CD8-positive, alpha-beta T cell (primary cell): ENCODE measurements at regions of chr1 and their contacts with region 1.

Region 1: DNA sequence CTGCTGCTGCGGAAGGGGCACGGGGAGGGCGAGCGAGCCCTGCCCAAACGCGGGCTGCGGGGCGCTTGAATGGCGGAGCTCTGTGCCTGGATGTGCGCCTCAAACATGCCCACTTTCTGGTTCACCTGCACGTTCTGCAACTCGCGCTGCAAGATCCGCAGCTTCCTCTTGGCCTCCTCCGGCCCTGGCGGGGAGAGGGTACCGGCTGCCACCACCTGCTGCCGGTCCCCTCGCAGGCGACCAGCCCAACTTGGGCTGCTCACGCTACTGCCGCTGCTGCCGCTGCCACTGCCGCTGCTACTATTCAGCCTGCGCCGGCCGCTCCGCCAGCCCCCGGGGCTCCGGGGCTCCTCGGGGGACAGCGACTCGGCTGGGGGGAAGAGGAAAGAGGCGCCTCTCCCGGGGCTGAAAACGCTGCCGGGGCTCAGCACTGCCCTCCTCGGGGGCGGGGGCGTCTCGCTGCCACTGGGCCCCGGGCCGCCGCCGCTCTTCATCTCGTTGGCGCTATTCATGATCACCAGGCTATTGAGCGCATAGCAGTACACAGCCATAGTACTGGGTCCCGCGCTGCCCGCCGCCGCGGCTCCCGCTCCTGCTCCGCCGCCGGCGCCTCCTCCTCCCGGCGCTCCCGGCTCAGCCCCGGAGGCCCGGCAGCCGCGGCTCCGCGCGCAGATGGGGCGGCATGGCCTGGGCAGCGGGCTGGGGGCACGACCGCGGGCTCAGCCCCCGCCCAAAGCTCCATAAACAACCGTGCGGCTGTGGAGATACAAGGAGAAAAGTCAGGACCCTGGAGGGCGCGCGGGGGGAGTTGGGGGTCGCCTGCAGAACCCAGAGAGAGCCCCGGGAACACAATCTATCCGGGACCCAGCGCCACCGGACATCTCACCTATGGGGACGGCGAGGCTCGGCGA is 1.9 kb downstream of the ITPKB start:
- DNase-seq: peak in 8 of 9 experiments; percentile 26 to 77 (median 61)
- ATAC-seq: peak; percentile 14
- H3K4me3 ChIP-seq: peak overlapping the region; percentile 99
- H3K4me3 Mint-ChIP-seq: peak overlapping the region; percentile 94
- H3K27ac ChIP-seq: peak overlapping the region; percentile 88 to 98
- H3K27ac Mint-ChIP-seq: peak overlapping the region; percentile 94
- H3K4me1 ChIP-seq: peaks cover 36% of the 10 kb centered on the region
- H3K4me1 Mint-ChIP-seq: peaks cover 44% of the 10 kb centered on the region
- H3K27me3 ChIP-seq: no peaks in the 10 kb centered on the region
- H3K27me3 Mint-ChIP-seq: no peaks in the 10 kb centered on the region
- CTCF ChIP-seq: no peak

Region 2: DNA sequence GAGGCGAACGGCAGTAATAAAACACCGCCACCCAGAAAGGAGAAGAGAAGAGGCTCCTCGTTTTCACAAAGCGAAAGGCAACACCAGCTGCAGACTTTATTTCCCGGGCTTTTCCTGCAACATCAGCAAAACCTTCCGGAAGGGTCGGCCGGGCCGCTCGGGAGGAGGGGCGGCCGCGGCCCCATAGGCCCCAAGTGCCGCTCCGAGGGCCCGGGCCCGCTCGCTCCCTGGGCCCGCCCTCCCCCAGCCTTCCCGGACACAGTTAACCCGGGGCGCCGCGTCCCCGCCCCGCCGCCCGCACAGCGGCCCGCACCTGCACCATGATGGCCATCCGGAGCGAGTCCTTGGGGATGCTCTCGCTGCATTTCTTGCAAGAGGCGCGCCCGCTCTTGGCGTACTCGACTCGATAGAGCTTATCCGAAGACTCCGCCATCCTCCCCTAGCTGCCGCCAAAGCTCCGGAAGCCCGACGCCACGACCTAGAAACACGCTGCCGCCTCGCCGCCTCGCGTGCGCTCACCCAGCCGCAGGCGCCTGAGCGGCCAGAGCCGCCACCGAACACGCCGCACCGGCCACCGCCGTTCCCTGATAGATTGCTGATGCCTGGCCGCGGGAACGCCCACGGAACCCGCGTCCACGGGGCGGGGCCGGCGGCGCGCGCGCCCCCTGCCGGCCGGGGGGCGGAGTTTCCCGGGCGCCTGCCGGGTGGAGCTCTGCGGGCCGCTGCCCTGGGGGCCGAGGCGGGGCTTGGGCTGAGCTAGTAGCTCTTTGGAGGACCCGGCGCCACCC is 329.5 kb before region 1 on chr1 and contains the start of gene PARP1:
- CTCF ChIA-PET with region 1: no interaction called
- POLR2A ChIA-PET with region 1: no interaction called
- intact Hi-C with region 1: loop called in 1 of 2 experiments (anchors 5 kb)
- DNase-seq: peak; percentile 78 to 94 (median 86)
- ATAC-seq: peak; percentile 87
- H3K4me3 ChIP-seq: peak within 1 kb of the TSS; percentile 68 to 92
- H3K4me3 Mint-ChIP-seq: peak within 1 kb of the TSS; percentile 94
- H3K27ac ChIP-seq: peak within 1 kb of the TSS; percentile 64 to 65
- H3K27ac Mint-ChIP-seq: peak within 1 kb of the TSS; percentile 90
- H3K4me1 ChIP-seq: peaks cover 45% of the 10 kb centered on the region
- H3K4me1 Mint-ChIP-seq: peaks cover 46% of the 10 kb centered on the region
- H3K27me3 ChIP-seq: no peaks in the 10 kb centered on the region
- H3K27me3 Mint-ChIP-seq: no peaks in the 10 kb centered on the region
- CTCF ChIP-seq: peak; percentile 73
- total RNA-seq, gene PARP1: 38.6 to 46.2 TPM

Region 3: DNA sequence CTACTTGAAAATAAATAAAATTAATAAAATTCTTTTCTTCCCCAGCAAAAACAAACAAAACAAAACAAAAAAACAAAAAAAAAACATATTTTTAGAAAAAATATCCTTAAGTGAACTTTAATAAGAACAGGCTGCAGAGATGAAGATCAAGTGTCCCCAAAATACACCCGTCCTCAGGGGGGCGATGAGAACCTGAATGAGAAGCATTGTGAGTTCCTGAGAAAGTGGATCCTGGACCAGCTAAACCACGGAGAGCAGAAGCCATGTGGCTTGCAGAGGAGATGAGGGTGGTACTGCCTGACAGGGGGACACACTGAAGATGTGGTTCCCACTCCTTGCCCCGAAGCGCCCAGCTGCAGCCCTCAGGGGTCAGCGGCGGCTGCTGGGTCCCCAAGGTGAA is 87.4 kb before region 1 on chr1:
- CTCF ChIA-PET with region 1: interaction called, 4 read pairs
- POLR2A ChIA-PET with region 1: interaction called, 12 read pairs
- intact Hi-C with region 1: loop called (anchors 1 to 2 kb)
- DNase-seq: peak in 6 of 9 experiments; percentile 53 to 74 (median 64)
- ATAC-seq: no peak
- H3K4me3 ChIP-seq: no peak overlapping the region
- H3K4me3 Mint-ChIP-seq: no peak overlapping the region
- H3K27ac ChIP-seq: peak overlapping the region in 1 of 2 experiments; percentile 23
- H3K27ac Mint-ChIP-seq: no peak overlapping the region
- H3K4me1 ChIP-seq: peaks cover 52% of the 10 kb centered on the region
- H3K4me1 Mint-ChIP-seq: peaks cover 57% of the 10 kb centered on the region
- H3K27me3 ChIP-seq: no peaks in the 10 kb centered on the region
- H3K27me3 Mint-ChIP-seq: no peaks in the 10 kb centered on the region
- CTCF ChIP-seq: peak; percentile 59

Region 4: DNA sequence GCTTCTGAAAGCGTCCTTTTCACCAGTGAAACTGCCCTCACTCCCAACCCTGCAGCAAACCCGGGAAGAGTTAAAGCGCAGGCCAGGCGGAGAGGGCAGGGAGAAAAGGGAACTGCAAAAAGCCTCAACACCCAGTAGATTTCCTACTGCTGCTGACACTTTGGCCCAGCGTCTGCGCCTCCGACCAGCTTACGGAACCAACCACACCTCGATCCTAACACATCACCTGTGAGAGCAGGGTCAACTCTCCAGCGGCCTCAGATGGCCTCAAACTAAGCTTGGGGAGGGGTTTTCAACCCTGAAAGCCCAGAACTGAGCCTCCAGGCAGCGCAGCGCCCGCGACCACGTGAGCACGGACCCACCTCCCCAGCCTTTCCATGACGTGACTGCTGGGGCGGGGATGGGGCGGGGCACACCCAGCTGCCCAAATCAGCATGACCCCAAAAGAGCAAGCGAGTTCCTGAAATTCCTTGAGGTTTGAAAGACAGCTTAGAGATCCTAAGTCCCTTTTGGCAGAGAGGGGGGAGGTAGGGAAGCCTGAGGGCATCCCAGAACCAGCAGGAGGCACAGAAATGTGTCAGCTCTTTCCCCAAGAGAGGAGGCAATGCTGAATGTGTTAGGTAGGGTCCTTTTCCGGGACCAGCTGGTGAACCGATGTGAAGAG is 57.2 kb before region 1 on chr1:
- CTCF ChIA-PET with region 1: interaction called, 8 read pairs
- POLR2A ChIA-PET with region 1: interaction called, 7 read pairs
- intact Hi-C with region 1: loop called (anchors 1 kb)
- DNase-seq: peak; percentile 51 to 88 (median 78)
- ATAC-seq: peak; percentile 18
- H3K4me3 ChIP-seq: peak overlapping the region; percentile 26 to 34
- H3K4me3 Mint-ChIP-seq: peak overlapping the region; percentile 75
- H3K27ac ChIP-seq: peak overlapping the region; percentile 69 to 86
- H3K27ac Mint-ChIP-seq: peak overlapping the region; percentile 99
- H3K4me1 ChIP-seq: peaks cover 99% of the 10 kb centered on the region
- H3K4me1 Mint-ChIP-seq: peaks cover 99% of the 10 kb centered on the region
- H3K27me3 ChIP-seq: no peaks in the 10 kb centered on the region
- H3K27me3 Mint-ChIP-seq: no peaks in the 10 kb centered on the region
- CTCF ChIP-seq: no peak

Region 5: DNA sequence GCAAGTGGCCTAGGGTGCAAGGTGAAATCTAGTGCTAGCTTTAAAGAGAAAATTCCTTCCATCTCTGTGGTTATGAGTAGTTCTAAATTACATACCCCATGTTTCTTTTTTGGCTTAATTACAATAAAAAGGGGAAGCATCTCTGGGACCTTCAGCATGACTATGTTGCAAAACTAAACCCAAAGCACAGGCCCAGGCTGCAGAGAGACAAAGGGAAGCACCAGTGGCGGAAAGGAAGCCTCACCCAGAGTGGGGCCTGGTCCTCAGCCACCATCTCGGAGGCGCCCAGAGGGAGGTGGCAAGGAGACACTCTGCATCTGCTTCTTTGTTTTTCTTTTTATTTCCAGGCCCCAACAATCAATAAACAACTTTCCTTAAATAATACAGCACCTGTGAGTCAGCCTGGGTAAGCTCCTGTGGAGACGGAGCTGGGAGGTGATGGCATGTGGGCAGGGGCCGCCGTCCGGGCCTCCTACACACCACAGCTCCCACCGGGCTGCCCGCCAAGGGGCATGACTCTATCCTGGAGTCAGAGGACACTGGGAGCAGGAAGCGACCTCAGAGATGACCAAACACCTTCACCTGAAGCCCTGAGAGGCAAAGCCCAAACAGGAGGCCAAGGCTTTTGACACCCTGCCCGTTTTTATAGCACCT is 19.8 kb before region 1 on chr1:
- CTCF ChIA-PET with region 1: interaction called, 7 read pairs
- POLR2A ChIA-PET with region 1: interaction called, 12 read pairs
- intact Hi-C with region 1: loop called in 1 of 2 experiments (anchors 1 kb)
- DNase-seq: peak in 4 of 9 experiments; percentile 41 to 66 (median 50)
- ATAC-seq: peak; percentile 18
- H3K4me3 ChIP-seq: peak overlapping the region in 1 of 2 experiments; percentile 12
- H3K4me3 Mint-ChIP-seq: peak overlapping the region; percentile 68
- H3K27ac ChIP-seq: peak overlapping the region; percentile 6 to 52
- H3K27ac Mint-ChIP-seq: peak overlapping the region; percentile 81
- H3K4me1 ChIP-seq: peaks cover 95% of the 10 kb centered on the region
- H3K4me1 Mint-ChIP-seq: peaks cover 88% of the 10 kb centered on the region
- H3K27me3 ChIP-seq: no peaks in the 10 kb centered on the region
- H3K27me3 Mint-ChIP-seq: no peaks in the 10 kb centered on the region
- CTCF ChIP-seq: no peak

Region 6: DNA sequence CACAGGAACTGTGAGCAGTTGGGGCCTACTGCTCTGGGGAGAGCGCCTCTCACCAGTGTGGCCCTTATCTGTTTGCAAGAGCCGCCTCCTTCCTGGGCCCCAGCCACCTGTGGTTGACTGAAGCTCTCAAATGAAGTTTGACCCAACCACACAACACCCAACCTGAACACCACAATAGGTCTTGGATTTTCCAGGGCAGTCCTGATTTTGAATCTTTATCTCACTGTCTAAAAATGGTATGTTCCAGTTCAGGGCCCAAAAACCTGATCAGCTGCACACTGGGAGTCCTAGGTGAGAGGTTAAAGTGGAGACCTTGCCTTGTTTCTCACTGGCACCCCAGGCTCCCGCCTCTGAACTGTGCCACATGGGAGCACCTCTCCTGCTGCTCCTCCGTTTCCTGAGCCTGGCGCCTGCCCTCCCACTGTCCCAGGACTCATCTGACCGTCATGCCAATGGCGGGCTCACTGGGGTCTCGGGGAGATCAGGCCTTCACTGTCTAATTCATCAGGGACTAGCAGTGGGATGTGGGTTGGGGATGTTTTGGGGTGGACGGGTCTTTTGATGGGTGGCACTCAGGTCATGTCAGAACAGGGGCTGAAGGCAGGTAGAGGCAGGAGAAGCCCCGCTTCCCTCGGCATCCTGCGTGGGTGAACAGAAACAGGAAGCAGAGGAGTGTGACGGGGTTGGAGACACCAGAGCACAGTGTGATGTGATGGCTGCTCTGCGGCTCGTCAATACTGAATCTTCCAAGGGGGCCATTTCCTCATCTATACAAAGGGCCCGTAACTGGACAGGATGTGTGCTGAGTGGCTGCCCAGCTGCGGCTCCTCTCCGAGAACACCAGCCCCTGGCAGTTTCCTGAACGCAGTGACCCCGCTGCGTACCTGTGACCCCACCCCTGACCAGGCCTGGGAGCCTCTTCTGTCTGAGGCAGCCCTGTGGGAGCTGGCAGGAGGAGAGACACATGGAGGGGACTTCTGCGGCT is 61.6 kb after region 1 on chr1:
- CTCF ChIA-PET with region 1: no interaction called
- POLR2A ChIA-PET with region 1: interaction called, 5 read pairs
- intact Hi-C with region 1: loop called (anchors 1 to 2 kb)
- DNase-seq: peak; percentile 19 to 84 (median 67)
- ATAC-seq: peak; percentile 84
- H3K4me3 ChIP-seq: peak overlapping the region in 1 of 2 experiments; percentile 2
- H3K4me3 Mint-ChIP-seq: peak overlapping the region; percentile 58
- H3K27ac ChIP-seq: peak overlapping the region; percentile 51 to 80
- H3K27ac Mint-ChIP-seq: peak overlapping the region; percentile 98
- H3K4me1 ChIP-seq: peaks cover 28% of the 10 kb centered on the region
- H3K4me1 Mint-ChIP-seq: peaks cover 34% of the 10 kb centered on the region
- H3K27me3 ChIP-seq: no peaks in the 10 kb centered on the region
- H3K27me3 Mint-ChIP-seq: no peaks in the 10 kb centered on the region
- CTCF ChIP-seq: no peak

Region 7: DNA sequence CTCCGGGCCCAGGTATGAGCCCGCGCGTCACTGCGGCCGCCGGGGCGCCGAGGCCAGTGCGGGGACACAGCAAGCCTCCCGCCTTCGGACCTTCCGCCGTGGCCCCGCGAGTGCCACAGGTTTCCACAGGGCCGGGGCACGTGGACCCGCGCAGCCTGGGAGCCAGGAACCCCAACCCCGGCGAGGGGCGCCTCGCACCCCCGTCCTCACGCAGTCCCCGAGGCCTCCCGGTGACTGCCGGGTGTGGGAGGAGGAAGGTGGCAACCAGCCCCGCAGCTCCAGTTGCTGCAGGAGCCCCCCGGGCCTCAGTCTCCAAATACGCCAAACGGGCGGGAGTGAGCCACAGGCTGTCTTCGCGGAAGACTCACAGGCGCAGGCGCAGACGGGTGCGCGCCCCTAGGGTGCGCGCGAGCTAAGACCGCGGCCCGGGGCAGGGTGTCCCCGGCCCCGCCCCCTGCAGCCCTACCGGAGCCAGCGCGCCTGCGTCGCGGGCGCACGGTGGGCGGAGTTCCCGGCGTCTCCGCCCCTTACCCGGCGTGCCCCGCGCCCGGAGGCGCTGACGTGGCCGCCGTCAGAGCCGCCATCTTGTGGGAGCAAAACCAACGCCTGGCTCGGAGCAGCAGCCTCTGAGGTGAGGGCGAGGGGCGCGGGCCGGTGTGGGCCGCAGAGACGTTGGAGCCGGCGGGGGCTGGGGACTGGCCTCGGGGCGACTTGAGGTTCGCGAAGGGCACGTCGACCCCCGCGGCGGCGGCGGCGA is 1345.2 kb after region 1 on chr1 and contains the start of gene ARF1:
- CTCF ChIA-PET with region 1: no interaction called
- POLR2A ChIA-PET with region 1: no interaction called
- intact Hi-C with region 1: loop called in 1 of 2 experiments (anchors 10 kb)
- DNase-seq: peak; percentile 83 to 98 (median 93)
- ATAC-seq: peak; percentile 93
- H3K4me3 ChIP-seq: peak within 1 kb of the TSS; percentile 94 to 95
- H3K4me3 Mint-ChIP-seq: peak within 1 kb of the TSS; percentile 96
- H3K27ac ChIP-seq: peak within 1 kb of the TSS; percentile 96 to 97
- H3K27ac Mint-ChIP-seq: peak within 1 kb of the TSS; percentile 97
- H3K4me1 ChIP-seq: peaks cover 50% of the 10 kb centered on the region
- H3K4me1 Mint-ChIP-seq: peaks cover 51% of the 10 kb centered on the region
- H3K27me3 ChIP-seq: no peaks in the 10 kb centered on the region
- H3K27me3 Mint-ChIP-seq: no peaks in the 10 kb centered on the region
- CTCF ChIP-seq: no peak
- total RNA-seq, gene ARF1: 375 to 381 TPM